ENCODE measurements at regions of chr1 and their contacts with region 1.

Region 1: GRCh38 chr1:145845514-145846161 is at the start of gene NUDT17:
- DNase-seq: peak; percentile 55 to 88 (median 82)
- ATAC-seq: peak; percentile 79
- H3K4me3 ChIP-seq: peak within 1 kb of the TSS; percentile 58 to 74
- H3K4me3 Mint-ChIP-seq: no peak within 1 kb of the TSS
- H3K27ac ChIP-seq: peak within 1 kb of the TSS; percentile 14 to 21
- H3K27ac Mint-ChIP-seq: peak within 1 kb of the TSS; percentile 47
- H3K4me1 ChIP-seq: peaks cover 12% of the 10 kb centered on the region
- H3K4me1 Mint-ChIP-seq: peaks cover 8% of the 10 kb centered on the region
- H3K27me3 ChIP-seq: no peaks in the 10 kb centered on the region
- H3K27me3 Mint-ChIP-seq: no peaks in the 10 kb centered on the region
- CTCF ChIP-seq: peak; percentile 91
- total RNA-seq, gene NUDT17: 1.4 TPM

Region 2: GRCh38 chr1:145740266-145740665 is 105.4 kb before region 1 on chr1:
- CTCF ChIA-PET with region 1: no interaction called
- POLR2A ChIA-PET with region 1: no interaction called
- intact Hi-C with region 1: no loop called
- DNase-seq: no peak
- ATAC-seq: no peak
- H3K4me3 ChIP-seq: no peak overlapping the region
- H3K4me3 Mint-ChIP-seq: no peak overlapping the region
- H3K27ac ChIP-seq: no peak overlapping the region
- H3K27ac Mint-ChIP-seq: no peak overlapping the region
- H3K4me1 ChIP-seq: no peaks in the 10 kb centered on the region
- H3K4me1 Mint-ChIP-seq: no peaks in the 10 kb centered on the region
- H3K27me3 ChIP-seq: no peaks in the 10 kb centered on the region
- H3K27me3 Mint-ChIP-seq: no peaks in the 10 kb centered on the region
- CTCF ChIP-seq: no peak

Region 3: GRCh38 chr1:145765574-145765973 is 80.1 kb before region 1 on chr1:
- CTCF ChIA-PET with region 1: no interaction called
- POLR2A ChIA-PET with region 1: no interaction called
- intact Hi-C with region 1: no loop called
- DNase-seq: no peak
- ATAC-seq: no peak
- H3K4me3 ChIP-seq: no peak overlapping the region
- H3K4me3 Mint-ChIP-seq: no peak overlapping the region
- H3K27ac ChIP-seq: no peak overlapping the region
- H3K27ac Mint-ChIP-seq: no peak overlapping the region
- H3K4me1 ChIP-seq: no peaks in the 10 kb centered on the region
- H3K4me1 Mint-ChIP-seq: no peaks in the 10 kb centered on the region
- H3K27me3 ChIP-seq: no peaks in the 10 kb centered on the region
- H3K27me3 Mint-ChIP-seq: no peaks in the 10 kb centered on the region
- CTCF ChIP-seq: no peak

Region 4: GRCh38 chr1:145871994-145872924 is 26.6 kb after region 1 on chr1:
- CTCF ChIA-PET with region 1: interaction called, 19 read pairs
- POLR2A ChIA-PET with region 1: interaction called, 4 read pairs
- intact Hi-C with region 1: no loop called
- DNase-seq: peak in 8 of 9 experiments; percentile 12 to 75 (median 42)
- ATAC-seq: peak; percentile 76
- H3K4me3 ChIP-seq: peak overlapping the region; percentile 49 to 59
- H3K4me3 Mint-ChIP-seq: peak overlapping the region; percentile 81
- H3K27ac ChIP-seq: peak overlapping the region; percentile 1 to 38
- H3K27ac Mint-ChIP-seq: peak overlapping the region; percentile 69
- H3K4me1 ChIP-seq: peaks cover 13% of the 10 kb centered on the region
- H3K4me1 Mint-ChIP-seq: peaks cover 15% of the 10 kb centered on the region
- H3K27me3 ChIP-seq: no peaks in the 10 kb centered on the region
- H3K27me3 Mint-ChIP-seq: peaks cover 2% of the 10 kb centered on the region
- CTCF ChIP-seq: no peak

Region 5: DNA sequence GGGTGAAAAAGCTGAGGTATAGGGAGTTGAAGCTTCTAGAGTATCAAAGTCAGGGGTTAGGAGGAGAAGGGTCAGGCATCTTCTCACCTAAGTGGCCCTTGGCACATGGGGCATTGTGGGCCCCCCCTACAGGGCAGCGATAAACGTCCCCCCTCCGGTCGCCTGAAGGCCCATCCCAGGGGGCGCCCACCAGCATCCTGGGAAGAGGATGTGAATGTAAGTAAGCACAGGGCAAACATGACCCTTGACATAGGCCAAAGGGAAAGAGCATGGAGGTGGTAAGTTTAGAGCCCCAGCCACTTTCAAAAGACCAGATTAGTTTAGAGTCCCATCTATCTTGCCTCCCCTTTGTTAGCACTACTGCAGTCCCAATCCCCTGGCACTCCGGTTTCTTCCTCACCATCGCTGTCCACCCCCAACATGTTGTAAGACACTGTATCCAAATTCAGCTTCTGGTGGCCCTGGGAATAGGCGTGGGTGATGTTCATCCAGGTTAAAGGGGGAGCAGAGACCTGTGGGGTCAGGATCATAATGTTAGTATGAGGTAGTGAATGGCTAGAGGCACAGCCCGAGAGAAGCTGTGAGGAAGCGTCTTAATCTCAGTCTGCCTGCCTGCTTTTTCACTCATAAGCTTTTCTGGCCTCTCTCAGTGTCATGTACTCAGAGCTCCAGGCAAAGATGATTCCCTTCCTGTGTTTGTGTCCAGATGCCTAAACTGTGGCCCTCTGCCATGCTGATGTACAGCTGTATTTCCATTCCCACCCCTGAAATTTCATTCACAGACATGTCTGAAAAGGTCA is 61.5 kb after region 1 on chr1:
- CTCF ChIA-PET with region 1: interaction called, 100 read pairs
- POLR2A ChIA-PET with region 1: no interaction called
- intact Hi-C with region 1: loop called (anchors 1 kb)
- DNase-seq: no peak
- ATAC-seq: no peak
- H3K4me3 ChIP-seq: no peak overlapping the region
- H3K4me3 Mint-ChIP-seq: no peak overlapping the region
- H3K27ac ChIP-seq: no peak overlapping the region
- H3K27ac Mint-ChIP-seq: peak overlapping the region; percentile 23
- H3K4me1 ChIP-seq: no peaks in the 10 kb centered on the region
- H3K4me1 Mint-ChIP-seq: peaks cover 5% of the 10 kb centered on the region
- H3K27me3 ChIP-seq: no peaks in the 10 kb centered on the region
- H3K27me3 Mint-ChIP-seq: no peaks in the 10 kb centered on the region
- CTCF ChIP-seq: no peak

Region 6: GRCh38 chr1:145963995-145964901 is 118.6 kb after region 1 on chr1 and contains the starts of genes ANKRD34A and POLR3GL:
- CTCF ChIA-PET with region 1: interaction called, 13 read pairs
- POLR2A ChIA-PET with region 1: interaction called, 4 read pairs
- intact Hi-C with region 1: no loop called
- DNase-seq: peak; percentile 77 to 95 (median 91)
- ATAC-seq: peak; percentile 88
- H3K4me3 ChIP-seq: peak within 1 kb of the TSS; percentile 87 to 92
- H3K4me3 Mint-ChIP-seq: peak within 1 kb of the TSS; percentile 98
- H3K27ac ChIP-seq: peak within 1 kb of the TSS; percentile 71 to 78
- H3K27ac Mint-ChIP-seq: peak within 1 kb of the TSS; percentile 98
- H3K4me1 ChIP-seq: peaks cover 32% of the 10 kb centered on the region
- H3K4me1 Mint-ChIP-seq: peaks cover 58% of the 10 kb centered on the region
- H3K27me3 ChIP-seq: no peaks in the 10 kb centered on the region
- H3K27me3 Mint-ChIP-seq: no peaks in the 10 kb centered on the region
- CTCF ChIP-seq: no peak
- total RNA-seq, gene ANKRD34A: 0.42 to 0.62 TPM
- total RNA-seq, gene POLR3GL: 12.9 to 14.4 TPM

Region 7: GRCh38 chr1:146012737-146013403 is 167.2 kb after region 1 on chr1:
- CTCF ChIA-PET with region 1: interaction called, 118 read pairs
- POLR2A ChIA-PET with region 1: interaction called, 9 read pairs
- intact Hi-C with region 1: loop called (anchors 1 kb)
- DNase-seq: peak; percentile 31 to 86 (median 61)
- ATAC-seq: peak; percentile 87
- H3K4me3 ChIP-seq: no peak overlapping the region
- H3K4me3 Mint-ChIP-seq: no peak overlapping the region
- H3K27ac ChIP-seq: no peak overlapping the region
- H3K27ac Mint-ChIP-seq: no peak overlapping the region
- H3K4me1 ChIP-seq: peaks cover 1% of the 10 kb centered on the region
- H3K4me1 Mint-ChIP-seq: peaks cover 4% of the 10 kb centered on the region
- H3K27me3 ChIP-seq: no peaks in the 10 kb centered on the region
- H3K27me3 Mint-ChIP-seq: peaks cover 3% of the 10 kb centered on the region
- CTCF ChIP-seq: peak; percentile 97

Measured in CD8-positive, alpha-beta T cell (primary cell).